Mucosa of descending colon (tissue), 3 donors: ENCODE measurements at regions of chr1 and their contacts with region 1.

Region 1: DNA sequence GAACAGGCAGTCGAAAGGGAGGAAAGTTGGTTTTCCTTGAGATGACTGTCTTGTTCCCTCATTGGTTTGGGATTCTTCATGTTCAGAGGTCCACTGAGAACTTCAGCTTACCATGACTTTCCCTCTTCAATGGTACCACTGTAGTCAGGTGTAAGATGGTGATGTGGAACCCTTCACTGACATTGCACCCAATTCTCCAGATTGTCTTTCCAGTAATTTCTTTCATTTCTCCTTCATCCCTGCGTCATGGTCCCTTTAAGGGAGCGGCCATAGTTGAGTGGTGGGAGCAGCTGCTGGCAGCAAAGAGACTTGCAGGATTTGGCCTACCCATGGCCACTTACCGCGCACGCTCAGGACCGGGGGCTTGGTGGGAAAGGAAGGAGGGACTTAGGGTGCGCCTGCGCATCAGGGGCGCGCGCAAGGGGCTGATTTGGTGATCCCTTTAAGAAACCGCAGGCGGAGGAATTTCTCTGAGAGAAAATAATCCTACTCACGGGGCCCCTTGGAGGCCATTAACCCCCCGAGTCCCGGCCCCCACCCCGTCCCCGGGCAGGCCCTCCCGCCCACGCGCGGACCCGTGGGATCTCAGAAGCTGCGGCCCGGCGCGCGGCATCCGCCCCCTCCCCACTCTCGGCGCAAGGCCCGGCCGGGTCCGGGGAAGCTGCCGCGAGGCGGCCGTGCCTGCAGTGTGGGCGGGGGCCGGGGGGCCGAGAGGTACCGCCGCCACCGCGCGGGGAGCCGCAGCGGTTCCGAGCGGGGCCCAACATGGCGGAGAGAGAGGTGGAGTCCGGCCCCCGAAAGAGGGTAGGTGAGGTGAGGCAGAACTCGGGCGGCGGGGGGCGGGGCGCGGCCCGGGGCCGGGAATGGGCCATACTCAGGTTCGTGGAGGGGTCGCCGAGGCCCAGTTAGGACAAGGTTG is at the start of gene ZMYM4:
- DNase-seq: peak; percentile 91 to 95 (median 92)
- ATAC-seq: peak; percentile 96
- H3K4me3 ChIP-seq: peak within 1 kb of the TSS; percentile 90
- H3K4me1 ChIP-seq: peaks cover 4% of the 10 kb centered on the region
- CTCF ChIP-seq: no peak
- total RNA-seq, gene ZMYM4: 30.5 to 46.6 (median 31.6) TPM

Region 2: DNA sequence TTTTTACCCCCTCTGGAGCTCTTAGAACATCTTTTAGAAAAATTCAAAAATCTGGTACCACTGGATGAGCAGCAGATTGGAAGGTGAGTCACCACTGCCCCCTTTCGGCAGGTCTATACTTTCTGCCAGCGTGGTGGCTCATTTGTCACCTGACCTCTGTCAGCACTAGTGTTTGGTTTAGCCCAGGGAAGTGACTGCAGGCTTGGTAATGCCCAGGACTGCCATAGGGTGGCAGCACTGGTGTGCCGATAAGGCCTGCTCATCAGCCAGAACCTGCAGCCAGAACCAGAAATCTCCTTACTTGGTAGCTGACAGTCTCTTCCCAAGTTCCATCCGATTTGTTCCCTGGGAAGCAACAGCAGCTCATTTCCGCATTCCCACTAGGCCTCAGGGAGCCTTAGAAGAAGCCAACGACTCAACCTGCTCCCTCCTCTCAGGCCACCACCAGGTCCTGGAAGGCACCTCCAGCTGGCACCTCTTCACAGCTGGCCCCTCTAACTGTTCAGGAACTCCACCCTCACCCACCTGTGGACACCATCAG is 415.8 kb before region 1 on chr1:
- intact Hi-C with region 1: loop called in 1 of 2 experiments (anchors 10 kb)
- DNase-seq: peak; percentile 88 to 95 (median 92)
- ATAC-seq: peak; percentile 100
- H3K4me3 ChIP-seq: no peak overlapping the region
- H3K4me1 ChIP-seq: peaks cover 2% of the 10 kb centered on the region
- CTCF ChIP-seq: peak; percentile 94

Region 3: DNA sequence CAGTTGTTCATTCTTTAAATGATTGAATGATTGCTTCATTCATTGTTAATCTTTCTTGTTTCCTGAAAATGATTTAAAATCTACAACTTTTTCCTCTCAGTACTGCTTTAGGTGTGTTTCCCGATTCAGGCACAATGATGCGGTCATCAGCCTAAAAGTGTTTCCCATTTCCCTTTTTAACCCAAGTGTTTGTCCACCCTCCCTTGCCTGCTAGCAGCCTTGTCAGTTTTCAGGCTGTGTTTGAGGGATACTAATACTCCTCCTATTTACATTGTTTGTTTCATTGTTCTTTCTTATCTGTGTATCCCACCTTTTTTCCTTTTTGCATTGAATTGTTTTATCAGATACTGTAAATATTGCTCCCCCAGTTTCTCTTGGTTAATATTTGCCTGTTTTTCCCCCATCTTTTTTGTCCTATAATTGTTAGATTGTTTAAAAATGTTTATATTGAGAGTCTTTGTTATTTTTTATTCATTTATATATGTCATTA is 157.6 kb after region 1 on chr1:
- intact Hi-C with region 1: no loop called
- DNase-seq: no peak
- ATAC-seq: no peak
- H3K4me3 ChIP-seq: no peak overlapping the region
- H3K4me1 ChIP-seq: no peaks in the 10 kb centered on the region
- CTCF ChIP-seq: no peak

Region 4: GRCh38 chr1:35930593-35931445 is 662.3 kb after region 1 on chr1 and contains the start of gene AGO3:
- intact Hi-C with region 1: no loop called
- DNase-seq: peak; percentile 82 to 91 (median 87)
- ATAC-seq: peak; percentile 94
- H3K4me3 ChIP-seq: peak within 1 kb of the TSS; percentile 70
- H3K4me1 ChIP-seq: peaks cover 14% of the 10 kb centered on the region
- CTCF ChIP-seq: no peak
- total RNA-seq, gene AGO3: 16.6 to 34.5 (median 16.9) TPM